Activated T-helper 1 cell treated with anti-CD3 and anti-CD28 coated beads, Interleukin-12 subunit alpha, Interleukin-12 subunit beta, Interleukin-2, Interleukin-4 antibody, amounts not matched to agents 30 ng/mL and 10 ng/mL and 1 ng/mL, durations not matched to agents 14 hours and 24 hours and 36 hours (primary cell): ENCODE measurements at regions of chr4 and their contacts with region 1.

Region 1: DNA sequence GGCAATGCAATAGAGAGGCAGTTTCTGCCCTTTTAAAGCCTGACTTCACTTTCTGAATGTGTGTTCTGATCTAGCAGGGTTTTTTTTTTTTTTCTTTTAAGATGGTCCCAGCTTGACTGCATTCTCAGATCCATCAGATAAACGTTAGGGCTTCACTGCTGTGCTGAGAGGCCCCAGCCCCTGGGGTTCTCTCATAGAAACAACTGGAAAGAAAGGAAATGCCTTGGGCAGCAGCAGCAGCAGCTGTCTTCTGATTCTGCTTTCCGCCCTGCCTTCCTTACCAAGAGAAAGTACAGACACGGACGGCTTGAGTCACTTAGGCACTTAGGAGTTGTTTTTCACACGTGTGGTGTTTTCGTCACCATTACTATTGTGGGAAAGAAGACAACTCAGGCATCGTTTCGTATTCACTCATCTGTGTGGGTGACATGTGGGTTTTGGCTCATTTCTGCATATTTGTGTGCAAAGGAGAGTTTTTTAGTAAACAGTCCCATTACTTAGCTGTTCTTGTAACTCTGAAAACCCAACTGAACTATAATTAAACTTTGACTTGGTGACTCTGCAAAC is 172.0 kb downstream of the PTTG2 start:
- DNase-seq: peak; percentile 80
- H3K4me3 Mint-ChIP-seq: peak overlapping the region; percentile 64
- H3K27ac Mint-ChIP-seq: peak overlapping the region; percentile 94
- H3K4me1 Mint-ChIP-seq: peaks cover 84% of the 10 kb centered on the region
- H3K27me3 Mint-ChIP-seq: peaks cover 3% of the 10 kb centered on the region

Region 2: DNA sequence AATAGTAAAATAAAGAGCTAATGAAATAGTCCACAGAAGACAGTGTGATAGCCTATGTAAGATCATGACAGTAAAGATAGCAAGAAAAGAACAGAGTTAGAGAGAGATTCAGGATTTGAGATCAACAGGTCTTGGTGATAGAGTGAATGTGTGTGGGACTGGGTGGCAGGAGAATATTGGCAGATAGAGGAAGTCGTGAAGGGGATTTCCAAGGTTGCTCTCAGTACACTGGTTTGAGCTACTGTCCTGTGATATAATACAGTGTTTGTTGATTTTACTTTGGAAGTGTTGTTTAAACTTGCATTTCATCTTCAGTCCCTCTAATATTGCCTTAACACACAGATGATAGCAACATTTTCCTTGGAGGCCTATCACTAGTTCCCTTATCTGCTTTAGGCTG is 1806.7 kb before region 1 on chr4:
- intact Hi-C with region 1: loop called (anchors 2 kb)
- DNase-seq: no peak
- H3K4me3 Mint-ChIP-seq: peak overlapping the region; percentile 23
- H3K27ac Mint-ChIP-seq: peak overlapping the region; percentile 73
- H3K4me1 Mint-ChIP-seq: peaks cover 71% of the 10 kb centered on the region
- H3K27me3 Mint-ChIP-seq: no peaks in the 10 kb centered on the region

Region 3: DNA sequence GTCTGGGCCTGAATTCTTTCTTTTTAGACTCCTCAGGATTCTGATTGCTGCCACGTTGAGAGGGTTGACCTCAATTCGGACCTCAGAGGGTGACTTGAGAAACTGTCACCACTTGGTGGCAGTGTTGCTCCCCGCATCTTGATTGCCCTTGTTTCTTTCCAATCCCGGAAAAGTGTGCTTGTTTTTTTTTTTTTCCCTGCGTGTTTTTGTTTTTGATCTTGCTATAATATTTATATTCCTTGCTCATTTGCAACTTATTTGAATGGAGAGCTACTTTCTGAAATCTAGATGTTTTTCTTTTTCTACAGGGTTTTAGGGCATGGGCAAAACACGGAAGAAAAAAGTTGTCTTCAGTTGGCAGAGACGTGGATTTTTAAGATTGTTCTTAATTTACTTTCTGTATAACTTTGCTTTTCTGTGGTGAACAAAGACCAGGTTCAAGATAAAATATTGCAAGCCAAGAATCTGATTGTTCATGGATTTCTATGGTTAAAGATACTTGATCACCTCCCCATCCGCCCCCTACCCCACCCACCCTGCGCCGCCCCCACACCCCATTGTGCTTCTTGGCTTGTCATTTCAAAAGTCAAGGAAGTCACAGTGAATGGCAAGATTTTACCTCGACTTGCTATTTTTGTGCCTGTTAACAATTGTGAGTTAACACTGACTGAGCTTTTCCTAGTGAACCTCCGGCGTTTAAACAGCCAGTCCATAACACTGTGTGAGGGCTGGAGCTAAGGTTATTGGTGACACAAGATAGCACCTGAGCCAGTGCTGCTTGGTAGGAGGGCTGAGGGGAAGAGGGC is 69.9 kb before region 1 on chr4:
- intact Hi-C with region 1: loop called (anchors 2 kb)
- DNase-seq: peak; percentile 42
- H3K4me3 Mint-ChIP-seq: peak overlapping the region; percentile 83
- H3K27ac Mint-ChIP-seq: peak overlapping the region; percentile 69
- H3K4me1 Mint-ChIP-seq: peaks cover 16% of the 10 kb centered on the region
- H3K27me3 Mint-ChIP-seq: no peaks in the 10 kb centered on the region

Region 4: GRCh38 chr4:38179690-38180377 is 47.6 kb after region 1 on chr4:
- intact Hi-C with region 1: loop called (anchors 1 kb)
- DNase-seq: peak; percentile 59
- H3K4me3 Mint-ChIP-seq: no peak overlapping the region
- H3K27ac Mint-ChIP-seq: no peak overlapping the region
- H3K4me1 Mint-ChIP-seq: peaks cover 54% of the 10 kb centered on the region
- H3K27me3 Mint-ChIP-seq: peaks cover 11% of the 10 kb centered on the region

Region 5: GRCh38 chr4:38523524-38524448 is 391.6 kb after region 1 on chr4:
- intact Hi-C with region 1: loop called (anchors 1 kb)
- DNase-seq: peak; percentile 48
- H3K4me3 Mint-ChIP-seq: peak overlapping the region; percentile 19
- H3K27ac Mint-ChIP-seq: peak overlapping the region; percentile 51
- H3K4me1 Mint-ChIP-seq: peaks cover 23% of the 10 kb centered on the region
- H3K27me3 Mint-ChIP-seq: peaks cover 32% of the 10 kb centered on the region

Region 6: GRCh38 chr4:38804654-38805295 is 672.6 kb after region 1 on chr4 and contains the start of gene TLR1:
- intact Hi-C with region 1: loop called (anchors 2 kb)
- DNase-seq: no peak
- H3K4me3 Mint-ChIP-seq: peak within 1 kb of the TSS; percentile 81
- H3K27ac Mint-ChIP-seq: peak within 1 kb of the TSS; percentile 87
- H3K4me1 Mint-ChIP-seq: peaks cover 38% of the 10 kb centered on the region
- H3K27me3 Mint-ChIP-seq: no peaks in the 10 kb centered on the region
- total RNA-seq, gene TLR1: 1.9 and 2.7 TPM in 2 replicates

Region 7: GRCh38 chr4:39032218-39033085 is 900.3 kb after region 1 on chr4 and contains the start of gene TMEM156:
- intact Hi-C with region 1: loop called (anchors 5 kb)
- DNase-seq: no peak
- H3K4me3 Mint-ChIP-seq: peak within 1 kb of the TSS; percentile 93
- H3K27ac Mint-ChIP-seq: peak within 1 kb of the TSS; percentile 87
- H3K4me1 Mint-ChIP-seq: peaks cover 46% of the 10 kb centered on the region
- H3K27me3 Mint-ChIP-seq: no peaks in the 10 kb centered on the region
- total RNA-seq, gene TMEM156: 27.7 and 29.4 TPM in 2 replicates